ENCODE measurements at regions of chr14 and their contacts with region 1.

Region 1: DNA sequence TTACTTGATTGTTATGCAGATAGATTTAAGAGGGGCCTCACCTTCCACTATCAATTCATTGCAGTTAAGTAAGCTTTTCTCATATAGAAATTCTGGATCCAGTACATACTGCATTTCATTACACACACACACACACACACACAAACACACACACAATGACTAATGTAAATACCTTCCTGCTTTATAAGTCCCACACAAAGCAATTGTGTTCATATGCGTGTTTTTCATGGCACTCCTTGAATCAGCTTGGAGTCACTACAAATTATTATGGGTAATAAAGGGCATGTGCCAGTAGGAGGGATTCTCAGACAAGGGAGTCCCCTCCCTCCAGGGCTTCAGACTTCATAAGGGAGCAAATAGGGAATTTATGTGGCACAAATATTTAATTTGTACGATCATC is 4.5 kb downstream of the MIPOL1 start:
- DNase-seq: no peak
- H3K4me3 ChIP-seq: no peak overlapping the region
- H3K27ac ChIP-seq: no peak overlapping the region
- H3K4me1 ChIP-seq: peaks cover 0 to 11% (median 0%) of the 10 kb centered on the region in 4 donors
- H3K27me3 ChIP-seq: no peaks in the 10 kb centered on the region
- CTCF ChIP-seq: no peak

Region 2: GRCh38 chr14:37230551-37231194 is 28.4 kb after region 1 on chr14:
- intact Hi-C with region 1: loop called (anchors 2 kb)
- DNase-seq: no peak
- H3K4me3 ChIP-seq: no peak overlapping the region
- H3K27ac ChIP-seq: no peak overlapping the region
- H3K4me1 ChIP-seq: no peaks in the 10 kb centered on the region
- H3K27me3 ChIP-seq: no peaks in the 10 kb centered on the region
- CTCF ChIP-seq: peak; percentile 55 to 68